ENCODE measurements at regions of chr18 and their contacts with region 1.

Region 1: DNA sequence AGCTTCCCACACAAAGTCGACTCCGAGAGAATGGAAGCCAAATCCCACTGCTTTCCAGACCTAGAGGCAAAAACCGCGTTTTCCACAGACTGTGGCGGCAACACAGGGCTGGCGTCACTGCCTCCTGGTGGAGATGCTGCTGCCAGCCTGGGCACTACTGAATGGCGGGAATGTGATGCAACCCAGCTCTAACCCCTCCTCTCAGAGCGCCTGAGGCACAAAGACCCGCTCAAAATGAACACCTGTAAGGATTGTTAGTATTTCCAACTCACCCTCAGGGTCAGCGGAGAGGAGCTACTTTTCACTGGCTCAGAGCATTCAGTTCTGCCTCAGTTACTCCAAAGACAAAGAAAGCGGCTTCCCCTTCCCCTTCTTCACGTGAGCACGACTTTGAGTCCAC is 548.0 kb upstream of the SALL3 start:
- DNase-seq: no peak
- ATAC-seq: peak; percentile 72; the same call in 1 of the 2 replicates
- H3K4me3 ChIP-seq: no peak overlapping the region
- H3K27ac ChIP-seq: no peak overlapping the region
- H3K4me1 ChIP-seq: no peaks in the 10 kb centered on the region
- H3K27me3 ChIP-seq: no peaks in the 10 kb centered on the region; the same call in none of the 2 replicates
- CTCF ChIP-seq: no peak

Region 2: DNA sequence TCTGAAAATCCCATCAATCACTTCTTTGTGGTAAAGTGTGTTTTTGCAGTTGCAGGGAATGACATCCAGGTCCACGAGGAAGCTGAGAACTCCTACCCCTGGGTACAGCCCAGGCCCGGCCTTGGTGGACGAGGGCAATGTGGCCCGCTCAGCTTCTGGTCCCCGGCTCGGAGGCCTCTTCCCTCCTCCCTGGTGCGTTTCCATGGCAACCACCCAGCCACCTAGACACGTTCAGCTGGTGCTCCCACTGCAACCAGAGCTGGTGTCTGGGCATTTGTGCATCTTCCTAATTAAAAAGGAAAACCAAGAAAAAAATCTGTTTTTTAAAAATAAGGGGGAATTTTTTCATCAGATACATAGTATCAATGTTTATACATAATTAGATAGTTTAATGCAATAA is 55.6 kb before region 1 on chr18:
- CTCF ChIA-PET with region 1: no interaction called
- POLR2A ChIA-PET with region 1: no interaction called
- in situ Hi-C with region 1: no loop called
- intact Hi-C with region 1: no loop called
- DNase-seq: no peak
- ATAC-seq: no peak
- H3K4me3 ChIP-seq: no peak overlapping the region
- H3K27ac ChIP-seq: no peak overlapping the region
- H3K4me1 ChIP-seq: no peaks in the 10 kb centered on the region
- H3K27me3 ChIP-seq: no peaks in the 10 kb centered on the region; the same call in 1 of the 2 replicates
- CTCF ChIP-seq: no peak

Region 3: DNA sequence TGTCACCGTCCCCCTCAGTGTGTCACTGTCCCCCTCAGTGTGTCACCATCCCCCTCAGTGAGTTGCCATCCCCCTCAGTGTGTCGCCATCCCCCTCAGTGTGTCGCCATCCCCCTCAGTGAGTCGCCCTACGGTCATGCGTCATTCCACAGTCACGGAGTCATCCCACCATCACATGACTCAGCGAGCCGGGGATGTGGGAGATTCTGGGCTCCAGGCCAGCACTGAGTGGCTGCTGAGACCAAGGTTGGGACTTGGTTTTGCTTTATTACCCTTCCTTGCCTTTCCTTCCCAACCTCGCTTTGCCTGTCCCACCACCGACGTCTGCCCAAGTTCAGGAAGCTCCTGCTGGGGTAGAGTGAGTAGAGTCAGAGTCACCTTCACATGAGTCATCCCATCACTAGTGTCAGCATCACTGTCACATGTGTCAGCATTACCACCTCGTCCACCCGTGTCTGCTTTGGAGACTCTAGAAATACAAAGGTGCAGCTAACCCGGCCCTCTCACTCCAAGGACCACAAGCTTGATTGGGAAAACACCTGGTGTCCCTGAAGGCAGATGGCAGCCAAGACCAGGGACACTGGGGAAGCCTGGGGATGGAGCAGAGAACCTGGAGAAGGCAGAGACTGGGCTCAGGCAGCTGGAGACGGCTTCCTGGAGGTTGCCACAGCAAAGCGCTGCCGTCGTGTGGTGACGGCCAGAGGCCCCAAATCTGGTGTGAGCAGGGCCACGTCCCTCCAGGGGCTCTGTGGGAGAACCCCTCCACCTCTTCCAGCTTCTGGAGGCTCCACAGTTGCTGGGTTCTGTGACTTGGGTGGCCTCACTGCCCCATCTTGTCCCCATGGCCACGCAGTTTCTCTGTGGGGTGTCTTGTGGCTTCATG is 62.8 kb after region 1 on chr18:
- CTCF ChIA-PET with region 1: no interaction called
- POLR2A ChIA-PET with region 1: no interaction called
- in situ Hi-C with region 1: no loop called
- intact Hi-C with region 1: no loop called
- DNase-seq: no peak
- ATAC-seq: no peak
- H3K4me3 ChIP-seq: no peak overlapping the region
- H3K27ac ChIP-seq: no peak overlapping the region
- H3K4me1 ChIP-seq: no peaks in the 10 kb centered on the region
- H3K27me3 ChIP-seq: no peaks in the 10 kb centered on the region
- CTCF ChIP-seq: no peak

Region 4: DNA sequence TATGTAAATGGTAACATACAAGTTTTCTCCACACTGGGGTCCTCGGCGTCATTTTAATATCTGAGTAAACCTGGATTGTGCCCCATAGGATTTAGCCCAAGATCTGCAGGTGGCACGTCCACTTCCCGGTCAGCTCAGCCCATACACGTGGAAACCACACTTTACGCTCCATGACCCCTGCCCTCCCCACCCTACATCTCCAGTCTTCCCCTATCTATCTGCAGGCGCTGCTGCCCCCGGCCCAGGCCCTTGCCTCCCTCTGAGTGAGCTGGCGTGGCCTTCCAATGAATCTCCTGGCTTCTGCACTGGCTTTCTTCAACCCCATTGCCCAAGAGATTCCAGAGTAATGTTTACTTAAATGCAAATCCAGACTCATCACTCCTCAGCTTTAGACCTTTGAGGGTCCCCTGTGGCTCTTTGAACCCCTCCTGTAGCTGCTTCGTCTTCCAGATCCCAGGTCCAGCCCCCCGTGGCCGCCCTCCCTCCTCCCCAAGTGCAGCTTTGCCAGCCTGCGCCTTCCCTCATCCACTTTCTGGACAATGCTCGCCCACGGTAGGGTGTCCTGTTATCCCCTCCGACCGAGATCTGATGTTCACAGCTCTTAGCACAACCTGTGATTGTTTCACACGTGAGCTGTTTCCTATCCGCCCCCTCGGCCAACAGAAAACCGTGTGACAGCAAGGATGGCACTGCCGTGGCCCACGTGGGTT is 126.7 kb after region 1 on chr18:
- CTCF ChIA-PET with region 1: no interaction called
- POLR2A ChIA-PET with region 1: interaction called, 10 read pairs
- in situ Hi-C with region 1: no loop called
- intact Hi-C with region 1: no loop called
- DNase-seq: no peak
- ATAC-seq: no peak
- H3K4me3 ChIP-seq: no peak overlapping the region
- H3K27ac ChIP-seq: no peak overlapping the region
- H3K4me1 ChIP-seq: no peaks in the 10 kb centered on the region
- H3K27me3 ChIP-seq: no peaks in the 10 kb centered on the region
- CTCF ChIP-seq: no peak

Measured in Panc1 (cell line).